Right ventricle myocardium inferior (tissue), 1 donor: ENCODE measurements at regions of chr1 and their contacts with region 1.

Region 1: GRCh38 chr1:58932859-58933598 is 149.2 kb upstream of the JUN start:
- DNase-seq: no peak
- ATAC-seq: peak; percentile 38

Region 2: GRCh38 chr1:58874757-58875755 is 58.0 kb before region 1 on chr1:
- intact Hi-C with region 1: no loop called
- DNase-seq: no peak
- ATAC-seq: peak; percentile 77

Region 3: DNA sequence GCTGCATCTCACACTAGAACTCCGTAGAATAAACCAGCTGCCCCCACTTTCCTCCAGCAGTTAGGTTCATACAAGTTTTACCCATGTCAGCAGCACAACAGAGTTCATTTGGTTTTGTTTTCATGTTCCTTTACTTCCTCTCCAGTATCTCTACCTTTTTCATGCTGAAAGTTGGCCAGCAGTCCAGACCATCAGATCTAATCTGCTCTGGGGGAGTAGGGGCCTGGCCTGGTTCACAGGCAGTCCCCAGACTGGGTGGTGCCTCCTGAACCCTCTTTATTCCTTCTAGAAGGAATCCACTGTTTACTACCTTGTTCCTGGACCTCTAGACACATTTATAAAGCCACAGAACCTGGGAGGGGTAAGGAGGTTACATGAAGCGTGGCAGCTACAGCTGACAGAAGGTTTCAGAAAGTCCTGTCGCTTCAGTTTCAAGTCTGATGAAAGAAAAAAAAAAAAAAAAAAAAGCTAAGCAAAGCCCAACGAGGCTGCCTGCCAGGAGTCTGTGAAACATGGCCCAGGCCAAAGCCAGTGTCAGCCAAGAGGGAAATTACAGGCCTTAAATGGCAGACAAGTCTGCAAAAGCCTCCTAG is 35.4 kb after region 1 on chr1:
- intact Hi-C with region 1: loop called (anchors 5 kb)
- DNase-seq: peak; percentile 88
- ATAC-seq: peak; percentile 73